Ascending aorta (tissue), 2 donors: ENCODE measurements at regions of chr9 and their contacts with region 1.

Region 1: GRCh38 chr9:127943731-127944144 is 6.1 kb upstream of the DPM2 start:
- DNase-seq: peak in 1 of 2 donors; percentile 90
- H3K4me3 ChIP-seq: no peak overlapping the region
- H3K27ac ChIP-seq: no peak overlapping the region
- H3K4me1 ChIP-seq: peaks cover 0 to 4% of the 10 kb centered on the region in 2 donors
- H3K27me3 ChIP-seq: no peaks in the 10 kb centered on the region
- CTCF ChIP-seq: peak; percentile 91 to 97 (median 96)

Region 2: DNA sequence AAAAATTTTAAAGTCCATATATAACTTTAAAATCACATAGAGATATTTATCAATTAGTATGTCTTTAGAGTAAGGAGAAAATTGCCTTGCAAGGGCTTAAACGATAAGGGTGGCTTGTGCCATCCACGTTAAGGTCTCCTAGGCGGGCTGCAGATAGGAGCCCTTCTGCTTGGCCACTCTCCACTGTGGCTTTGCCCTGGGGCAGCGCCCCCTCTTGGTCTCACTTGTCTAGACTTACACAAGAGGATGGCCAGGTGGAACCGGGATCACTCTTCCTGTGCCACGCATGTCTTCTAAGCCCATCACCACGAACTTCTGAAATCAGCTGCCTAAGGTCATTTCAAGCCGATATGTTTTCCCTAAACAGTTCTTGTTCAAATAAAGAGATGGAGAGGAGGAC is 138.1 kb before region 1 on chr9:
- intact Hi-C with region 1: no loop called
- DNase-seq: no peak
- H3K4me3 ChIP-seq: no peak overlapping the region
- H3K27ac ChIP-seq: no peak overlapping the region
- H3K4me1 ChIP-seq: peaks cover 21 to 31% of the 10 kb centered on the region in 2 donors
- H3K27me3 ChIP-seq: no peaks in the 10 kb centered on the region
- CTCF ChIP-seq: peak in 1 of 3 experiments; percentile 11

Region 3: DNA sequence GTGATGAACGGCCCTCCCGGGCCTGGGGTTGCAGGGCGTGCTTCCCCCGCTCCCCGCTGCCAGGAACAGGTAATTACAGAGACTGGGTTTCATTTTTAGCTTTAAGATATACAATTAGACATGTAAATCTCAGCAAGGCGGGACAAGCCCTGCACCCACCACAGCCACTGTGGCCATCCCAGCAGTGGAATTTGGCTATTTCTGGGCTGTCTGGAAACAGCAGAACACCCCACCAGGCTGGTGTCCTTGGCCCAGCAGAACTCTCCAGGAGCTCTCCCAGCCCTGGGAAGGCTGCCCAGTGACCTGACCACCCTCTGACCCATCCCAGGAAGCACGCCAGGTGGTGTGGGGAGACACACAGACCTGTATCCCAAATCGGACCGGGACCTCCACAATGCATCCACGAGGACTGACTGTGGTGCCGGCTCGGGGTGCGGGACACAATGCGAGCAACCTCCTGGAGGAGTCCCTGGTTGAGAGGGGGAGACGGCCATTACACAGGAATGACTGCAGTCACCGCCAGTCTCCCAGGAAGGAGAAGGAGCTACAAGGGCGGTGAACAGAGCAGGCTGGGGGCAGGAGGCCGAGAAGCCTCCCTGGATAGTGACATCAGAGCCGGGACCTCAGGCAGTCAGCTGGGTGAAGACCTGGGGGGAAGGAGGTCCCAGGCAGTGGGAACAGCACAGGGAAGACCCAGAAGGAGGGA is 19.8 kb after region 1 on chr9:
- intact Hi-C with region 1: loop called (anchors 2 kb)
- DNase-seq: no peak
- H3K4me3 ChIP-seq: no peak overlapping the region
- H3K27ac ChIP-seq: peak overlapping the region; percentile 97 to 98
- H3K4me1 ChIP-seq: peaks cover 21 to 63% of the 10 kb centered on the region in 2 donors
- H3K27me3 ChIP-seq: no peaks in the 10 kb centered on the region
- CTCF ChIP-seq: no peak

Region 4: DNA sequence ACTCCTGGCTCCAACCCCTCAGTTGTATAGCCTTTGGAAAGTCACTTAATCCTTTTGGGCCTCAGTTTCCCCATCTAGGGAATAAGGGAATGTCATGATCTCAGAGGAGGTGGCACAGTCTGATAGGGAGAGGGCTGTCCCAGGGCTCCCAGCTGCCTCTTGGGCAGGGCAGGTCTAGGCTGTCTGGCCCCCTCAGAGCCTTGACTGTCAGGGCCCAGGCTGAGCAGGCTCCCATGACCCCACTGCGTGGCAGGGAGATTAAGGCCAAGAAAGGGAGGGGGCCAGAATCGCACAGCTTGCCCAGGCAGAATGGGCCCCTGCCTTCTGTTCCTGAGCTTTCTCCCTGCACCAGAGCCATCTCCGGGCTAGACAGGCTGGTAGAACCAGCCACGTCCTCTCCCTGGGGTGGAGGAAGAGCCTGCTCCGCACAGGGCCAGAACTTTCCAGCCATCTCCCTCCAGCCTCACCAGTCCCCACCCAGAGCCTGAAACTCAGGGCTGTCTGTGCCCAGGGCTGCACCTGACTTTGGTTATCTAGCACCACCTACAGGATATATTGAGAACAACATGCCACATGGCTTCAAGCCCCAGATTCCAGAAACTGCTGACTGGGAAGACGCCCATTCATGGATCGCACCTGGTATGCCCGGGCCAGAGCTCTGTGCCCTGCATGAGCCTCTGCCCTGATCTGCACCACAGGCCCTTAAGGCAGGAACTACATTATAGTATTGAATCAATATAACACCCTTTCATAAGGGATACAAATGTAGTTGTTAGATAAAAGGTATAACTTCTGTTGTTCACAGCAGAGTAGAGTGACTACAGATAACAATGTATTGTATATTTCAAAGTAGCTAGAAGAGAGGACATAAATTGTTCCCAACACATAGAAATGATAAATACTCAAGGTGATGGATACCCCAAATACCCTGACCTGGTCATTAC is 91.4 kb after region 1 on chr9:
- intact Hi-C with region 1: loop called (anchors 1 kb)
- DNase-seq: peak in 1 of 2 donors; percentile 81
- H3K4me3 ChIP-seq: no peak overlapping the region
- H3K27ac ChIP-seq: no peak overlapping the region
- H3K4me1 ChIP-seq: no peaks in the 10 kb centered on the region
- H3K27me3 ChIP-seq: no peaks in the 10 kb centered on the region
- CTCF ChIP-seq: peak; percentile 86 to 92 (median 89)

Region 5: GRCh38 chr9:128117613-128118471 is 174.1 kb after region 1 on chr9:
- intact Hi-C with region 1: loop called (anchors 2 kb)
- DNase-seq: peak; percentile 61 to 94
- H3K4me3 ChIP-seq: peak overlapping the region in 1 of 2 donors; percentile 16
- H3K27ac ChIP-seq: no peak overlapping the region
- H3K4me1 ChIP-seq: peaks cover 0 to 4% of the 10 kb centered on the region in 2 donors
- H3K27me3 ChIP-seq: no peaks in the 10 kb centered on the region
- CTCF ChIP-seq: peak; percentile 100